A673 (cell line): ENCODE measurements at regions of chr2 and their contacts with region 1.

Region 1: DNA sequence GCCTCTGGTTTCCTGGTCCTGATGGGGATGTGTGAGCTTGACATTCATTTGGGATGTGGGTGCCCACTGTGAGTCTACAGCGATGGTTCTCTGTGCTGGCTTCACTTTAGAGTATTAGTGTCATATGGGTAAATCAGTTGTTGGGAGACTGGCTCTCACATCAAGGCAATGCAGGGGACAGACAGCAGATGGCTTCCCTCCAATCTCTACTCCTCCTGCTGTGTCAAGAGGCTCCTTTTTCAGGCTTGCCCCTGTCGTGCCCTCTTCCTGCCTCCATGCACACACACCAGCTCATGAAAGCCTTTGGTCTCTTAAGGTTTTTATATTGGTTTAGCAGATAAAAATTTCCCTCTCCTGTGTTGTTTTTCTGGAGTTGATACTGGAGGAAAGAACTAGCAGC is 315.6 kb downstream of the RDH14 start:
- DNase-seq: peak; percentile 88
- H3K4me3 ChIP-seq: no peak overlapping the region
- H3K27ac ChIP-seq: peak overlapping the region; percentile 96
- H3K4me1 ChIP-seq: peaks cover 68% of the 10 kb centered on the region
- H3K27me3 ChIP-seq: no peaks in the 10 kb centered on the region
- CTCF ChIP-seq: peak; percentile 45

Region 2: DNA sequence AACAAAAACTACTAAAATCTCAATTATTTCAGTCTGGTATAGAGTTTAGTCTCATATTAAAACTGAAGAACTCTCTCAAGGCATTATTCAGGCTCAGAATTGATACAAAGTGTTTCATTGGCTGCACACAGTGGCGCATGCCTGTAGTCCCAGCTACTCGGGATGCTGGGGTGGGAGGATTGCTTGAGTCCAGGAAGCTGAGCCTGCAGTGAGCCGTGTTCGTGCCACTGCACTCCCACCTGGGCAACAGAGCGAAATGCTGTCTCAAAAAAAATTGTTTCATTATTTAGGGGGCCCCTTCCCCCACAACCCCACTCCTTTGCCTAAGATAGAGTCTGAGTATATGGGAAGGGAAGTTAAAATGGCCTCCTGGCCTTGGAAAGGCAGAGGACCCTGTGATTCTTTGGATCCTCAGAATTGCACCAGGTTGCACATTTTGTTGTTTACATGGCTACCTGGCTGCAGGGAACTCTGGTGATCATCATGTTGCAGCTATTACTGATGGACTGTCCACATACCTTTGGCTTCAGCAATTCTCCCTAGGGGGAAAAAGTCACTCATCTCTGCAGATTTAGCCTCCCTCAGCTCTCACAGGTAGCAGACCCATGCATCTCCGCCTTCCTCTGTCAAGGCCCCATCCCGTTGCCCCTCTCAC is 1560.0 kb before region 1 on chr2:
- CTCF ChIA-PET with region 1: no interaction called
- POLR2A ChIA-PET with region 1: no interaction called
- intact Hi-C with region 1: loop called (anchors 2 kb)
- DNase-seq: peak; percentile 79
- H3K4me3 ChIP-seq: peak overlapping the region; percentile 8
- H3K27ac ChIP-seq: peak overlapping the region; percentile 100
- H3K4me1 ChIP-seq: peaks cover 67% of the 10 kb centered on the region
- H3K27me3 ChIP-seq: no peaks in the 10 kb centered on the region
- CTCF ChIP-seq: no peak

Region 3: DNA sequence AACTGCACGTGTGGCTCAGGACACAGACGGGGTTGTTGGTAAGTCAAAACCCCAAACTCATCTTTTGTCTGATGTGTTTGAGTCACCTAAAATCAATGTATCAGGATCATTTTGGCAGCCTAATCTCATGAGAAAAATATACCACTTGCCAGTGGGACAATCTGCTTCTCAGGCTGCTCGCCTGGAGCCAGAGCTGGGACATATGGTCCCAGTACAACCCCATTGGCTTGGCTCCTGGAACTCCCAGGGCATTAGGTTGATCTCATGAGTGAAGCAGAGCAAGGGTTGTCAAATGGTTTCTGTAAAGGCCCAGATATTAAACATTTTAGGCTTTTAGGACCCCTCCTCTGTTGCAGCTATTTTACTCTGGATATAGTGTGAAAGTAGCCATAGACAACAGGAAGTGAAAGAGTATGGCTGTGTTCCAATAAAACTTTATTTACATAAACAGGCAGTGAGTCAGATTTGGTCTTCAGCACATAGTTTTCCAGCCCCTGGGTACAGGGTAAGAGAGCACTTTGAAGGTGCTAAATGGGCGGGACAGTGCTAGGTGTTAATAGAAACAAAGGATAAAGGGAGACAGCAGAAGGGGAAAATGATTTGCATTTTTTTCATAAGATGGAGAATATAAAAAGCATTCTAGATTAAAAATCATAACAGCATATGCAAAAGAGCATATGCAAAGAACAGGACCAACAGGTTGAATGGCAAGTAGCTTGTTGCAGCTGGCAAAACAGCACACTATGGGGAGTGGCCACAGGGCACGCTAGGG is 75.5 kb before region 1 on chr2:
- CTCF ChIA-PET with region 1: no interaction called
- POLR2A ChIA-PET with region 1: no interaction called
- intact Hi-C with region 1: no loop called
- DNase-seq: peak; percentile 50
- H3K4me3 ChIP-seq: no peak overlapping the region
- H3K27ac ChIP-seq: no peak overlapping the region
- H3K4me1 ChIP-seq: peaks cover 40% of the 10 kb centered on the region
- H3K27me3 ChIP-seq: no peaks in the 10 kb centered on the region
- CTCF ChIP-seq: no peak

Region 4: DNA sequence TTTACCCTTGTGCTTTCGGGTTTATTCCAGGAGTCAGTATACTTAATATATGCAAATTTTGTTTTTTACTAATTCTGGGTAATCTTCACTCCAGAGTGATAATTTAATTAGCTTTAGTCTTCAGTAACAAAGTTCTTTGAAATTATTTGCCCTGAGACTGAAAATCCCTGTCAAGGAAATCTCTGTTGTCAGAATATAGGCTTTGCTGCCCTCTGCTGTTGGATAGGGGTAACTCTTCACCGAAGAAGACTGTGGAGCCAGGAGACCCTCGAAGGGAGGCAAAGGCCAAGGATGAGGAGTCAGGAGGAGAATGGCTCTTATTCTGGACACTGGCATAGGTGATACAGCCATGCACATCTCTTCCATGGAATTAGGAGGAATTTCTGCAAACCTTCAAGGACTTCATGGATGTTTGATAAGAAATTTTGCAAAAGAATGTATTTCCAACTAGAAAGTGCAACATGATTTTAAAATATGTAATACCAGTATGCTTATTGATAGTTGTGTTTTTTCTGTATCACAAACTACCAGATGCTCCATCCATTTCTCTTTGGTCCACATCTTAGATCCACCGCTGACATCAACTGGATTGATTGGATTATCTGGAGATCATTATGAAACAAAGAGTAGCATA is 133.3 kb after region 1 on chr2:
- CTCF ChIA-PET with region 1: interaction called, 5 read pairs
- POLR2A ChIA-PET with region 1: interaction called, 5 read pairs
- intact Hi-C with region 1: loop called (anchors 1 kb)
- DNase-seq: peak; percentile 82
- H3K4me3 ChIP-seq: no peak overlapping the region
- H3K27ac ChIP-seq: peak overlapping the region; percentile 63
- H3K4me1 ChIP-seq: peaks cover 58% of the 10 kb centered on the region
- H3K27me3 ChIP-seq: no peaks in the 10 kb centered on the region
- CTCF ChIP-seq: peak; percentile 87